Calu3 (cell line): ENCODE measurements at regions of chr1 and their contacts with region 1.

Region 1: GRCh38 chr1:60765204-60765603 is 317.2 kb upstream of the NFIA start:
- DNase-seq: peak; percentile 36
- H3K4me3 Mint-ChIP-seq: no peak overlapping the region
- H3K27ac Mint-ChIP-seq: no peak overlapping the region
- H3K4me1 Mint-ChIP-seq: no peaks in the 10 kb centered on the region
- H3K27me3 Mint-ChIP-seq: no peaks in the 10 kb centered on the region
- CTCF ChIP-seq: peak; percentile 55

Region 2: GRCh38 chr1:60160141-60160540 is 605.1 kb before region 1 on chr1:
- CTCF ChIA-PET with region 1: interaction called, 3 read pairs
- intact Hi-C with region 1: loop called (anchors 5 kb)
- DNase-seq: no peak
- H3K4me3 Mint-ChIP-seq: no peak overlapping the region
- H3K27ac Mint-ChIP-seq: no peak overlapping the region
- H3K4me1 Mint-ChIP-seq: no peaks in the 10 kb centered on the region
- H3K27me3 Mint-ChIP-seq: no peaks in the 10 kb centered on the region
- CTCF ChIP-seq: no peak

Region 3: GRCh38 chr1:60268451-60268850 is 496.8 kb before region 1 on chr1:
- CTCF ChIA-PET with region 1: no interaction called
- intact Hi-C with region 1: no loop called
- DNase-seq: no peak
- H3K4me3 Mint-ChIP-seq: no peak overlapping the region
- H3K27ac Mint-ChIP-seq: no peak overlapping the region
- H3K4me1 Mint-ChIP-seq: peaks cover 19% of the 10 kb centered on the region
- H3K27me3 Mint-ChIP-seq: no peaks in the 10 kb centered on the region
- CTCF ChIP-seq: no peak

Region 4: DNA sequence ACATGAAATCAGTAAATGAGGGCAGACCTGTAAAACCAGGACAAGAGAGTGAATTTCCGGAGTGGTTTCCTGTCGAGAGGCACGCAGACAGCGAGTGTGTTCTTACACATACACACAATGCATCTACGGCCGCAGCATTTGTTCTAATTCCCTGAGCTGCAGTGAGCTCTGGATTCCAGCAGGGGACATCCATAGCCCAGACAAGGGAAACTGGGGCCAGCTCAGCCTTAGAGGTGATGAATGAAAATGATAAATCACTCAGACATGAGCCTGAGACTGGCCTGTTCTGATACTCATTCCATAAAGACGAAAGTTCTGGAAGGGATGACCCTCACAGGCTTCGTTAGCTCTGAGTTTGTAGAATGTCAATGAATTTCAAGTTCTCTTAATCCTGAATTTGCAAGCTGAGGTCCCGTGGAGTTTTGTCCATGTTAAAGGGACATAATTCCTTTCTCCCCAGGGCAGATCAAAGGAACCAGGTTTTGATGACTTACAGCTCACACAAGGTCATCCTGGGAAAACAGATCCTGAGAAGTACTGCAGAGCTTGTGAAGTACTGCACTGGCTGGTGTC is 483.8 kb before region 1 on chr1:
- CTCF ChIA-PET with region 1: interaction called, 27 read pairs
- intact Hi-C with region 1: loop called (anchors 1 kb)
- DNase-seq: peak; percentile 66
- H3K4me3 Mint-ChIP-seq: no peak overlapping the region
- H3K27ac Mint-ChIP-seq: peak overlapping the region; percentile 30
- H3K4me1 Mint-ChIP-seq: peaks cover 22% of the 10 kb centered on the region
- H3K27me3 Mint-ChIP-seq: no peaks in the 10 kb centered on the region
- CTCF ChIP-seq: peak; percentile 79

Region 5: DNA sequence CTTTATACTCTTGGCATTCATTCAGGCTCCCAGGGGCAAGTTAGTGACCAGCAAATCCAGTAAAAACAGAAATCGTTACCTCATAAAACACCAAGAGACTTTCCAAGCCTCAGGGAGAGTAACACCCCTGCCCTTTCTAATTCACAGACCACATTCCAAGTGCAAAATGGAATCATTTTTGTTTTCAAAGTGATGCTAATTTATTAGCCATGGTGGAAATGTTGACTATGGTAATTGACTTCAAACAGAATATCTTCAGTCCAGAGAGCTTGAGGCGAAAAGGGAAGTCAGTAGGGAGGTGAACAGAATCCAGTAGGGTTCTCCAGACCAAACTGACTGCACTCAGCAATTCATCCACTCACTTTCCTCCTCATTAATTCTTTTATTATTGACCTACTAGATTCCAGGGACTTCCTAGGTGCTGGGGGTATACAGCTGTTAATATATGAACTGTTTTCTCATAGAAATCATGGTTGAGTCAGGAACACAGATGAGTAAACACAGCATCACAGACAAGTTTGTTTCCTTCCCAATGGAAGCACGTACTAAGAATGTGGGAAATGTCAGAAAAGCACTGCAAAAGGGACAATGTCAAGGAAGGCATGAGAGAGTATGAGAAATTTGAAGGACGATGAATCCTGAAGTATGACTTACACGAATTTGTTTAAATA is 303.1 kb before region 1 on chr1:
- CTCF ChIA-PET with region 1: no interaction called
- intact Hi-C with region 1: no loop called
- DNase-seq: no peak
- H3K4me3 Mint-ChIP-seq: no peak overlapping the region
- H3K27ac Mint-ChIP-seq: no peak overlapping the region
- H3K4me1 Mint-ChIP-seq: no peaks in the 10 kb centered on the region
- H3K27me3 Mint-ChIP-seq: no peaks in the 10 kb centered on the region
- CTCF ChIP-seq: no peak